ENCODE measurements at regions of chr2 and their contacts with region 1.

Region 1: DNA sequence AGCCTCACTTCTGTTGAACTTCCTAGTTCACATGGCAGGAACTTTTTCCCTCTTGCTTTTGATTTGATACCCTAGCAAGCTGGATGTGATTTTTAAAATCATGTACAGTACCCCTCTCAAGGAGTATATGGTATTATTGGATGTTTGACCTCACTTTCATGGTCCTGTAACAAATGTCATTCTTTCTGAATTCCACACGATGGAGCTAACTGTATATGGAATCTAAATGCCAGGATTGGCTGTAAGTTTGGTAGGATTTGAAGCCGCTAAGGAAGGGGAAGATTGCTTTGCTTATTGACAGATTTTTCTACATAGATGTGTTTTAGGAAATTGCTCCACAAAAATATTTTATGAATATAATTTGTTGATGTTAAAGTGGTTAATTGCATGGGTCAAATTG is 18.3 kb downstream of the MAIP1 start:
- DNase-seq: peak; percentile 14
- H3K4me3 ChIP-seq: no peak overlapping the region
- CTCF ChIP-seq: peak; percentile 41

Region 2: DNA sequence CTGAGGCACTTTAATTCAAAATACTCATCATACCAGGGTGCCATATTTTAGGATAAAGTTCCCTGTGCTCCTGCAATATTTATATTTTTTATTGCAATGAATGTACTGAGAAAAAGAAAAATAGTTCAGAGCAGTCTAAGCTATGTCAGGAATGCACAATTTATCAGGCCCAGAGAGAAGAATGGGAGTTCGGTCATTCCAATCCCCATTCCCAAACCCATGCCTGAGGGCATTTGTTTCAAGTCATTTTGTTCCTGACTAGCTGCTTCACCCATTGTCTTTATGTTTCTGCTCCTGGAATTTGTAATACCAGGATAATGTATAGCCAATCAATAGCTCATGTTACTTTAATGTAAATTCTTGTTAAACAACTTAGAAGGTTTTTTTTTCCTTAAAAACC is 98.3 kb before region 1 on chr2:
- CTCF ChIA-PET with region 1: no interaction called
- POLR2A ChIA-PET with region 1: no interaction called
- DNase-seq: no peak
- H3K4me3 ChIP-seq: no peak overlapping the region
- CTCF ChIP-seq: no peak

Region 3: DNA sequence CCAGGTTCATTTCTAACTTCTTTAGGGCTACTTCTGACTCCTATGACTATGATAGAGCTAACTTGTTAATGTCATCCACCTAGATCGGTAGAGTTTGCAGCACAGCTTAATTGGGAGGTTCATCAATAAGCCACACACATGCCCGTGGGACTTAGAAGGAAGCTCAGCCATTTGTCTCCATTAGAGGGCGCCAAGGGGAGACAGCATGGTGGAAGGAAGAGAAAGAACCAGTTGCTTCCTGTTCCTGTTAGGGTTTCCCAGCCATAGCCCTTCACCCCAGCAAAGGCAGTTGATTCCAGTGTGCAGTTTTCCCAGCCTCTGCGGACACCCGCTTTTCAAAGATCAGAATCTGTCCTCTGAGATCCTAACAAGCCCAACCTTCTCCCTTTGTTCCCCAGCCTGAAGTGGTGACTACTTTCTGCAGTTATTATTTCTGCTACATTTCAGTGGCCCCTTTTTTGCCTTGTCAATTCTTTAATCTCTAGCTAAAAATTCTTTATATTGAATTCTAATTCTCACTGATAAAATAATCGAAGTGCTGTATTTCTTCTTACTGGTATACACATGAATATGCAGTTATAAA is 12.0 kb after region 1 on chr2:
- CTCF ChIA-PET with region 1: interaction called, 33 read pairs
- POLR2A ChIA-PET with region 1: no interaction called
- DNase-seq: no peak
- H3K4me3 ChIP-seq: no peak overlapping the region
- CTCF ChIP-seq: peak; percentile 70

Region 4: GRCh38 chr2:200077210-200077650 is 103.5 kb after region 1 on chr2:
- CTCF ChIA-PET with region 1: no interaction called
- POLR2A ChIA-PET with region 1: no interaction called
- DNase-seq: peak; percentile 85
- H3K4me3 ChIP-seq: no peak overlapping the region
- CTCF ChIP-seq: no peak

Region 5: DNA sequence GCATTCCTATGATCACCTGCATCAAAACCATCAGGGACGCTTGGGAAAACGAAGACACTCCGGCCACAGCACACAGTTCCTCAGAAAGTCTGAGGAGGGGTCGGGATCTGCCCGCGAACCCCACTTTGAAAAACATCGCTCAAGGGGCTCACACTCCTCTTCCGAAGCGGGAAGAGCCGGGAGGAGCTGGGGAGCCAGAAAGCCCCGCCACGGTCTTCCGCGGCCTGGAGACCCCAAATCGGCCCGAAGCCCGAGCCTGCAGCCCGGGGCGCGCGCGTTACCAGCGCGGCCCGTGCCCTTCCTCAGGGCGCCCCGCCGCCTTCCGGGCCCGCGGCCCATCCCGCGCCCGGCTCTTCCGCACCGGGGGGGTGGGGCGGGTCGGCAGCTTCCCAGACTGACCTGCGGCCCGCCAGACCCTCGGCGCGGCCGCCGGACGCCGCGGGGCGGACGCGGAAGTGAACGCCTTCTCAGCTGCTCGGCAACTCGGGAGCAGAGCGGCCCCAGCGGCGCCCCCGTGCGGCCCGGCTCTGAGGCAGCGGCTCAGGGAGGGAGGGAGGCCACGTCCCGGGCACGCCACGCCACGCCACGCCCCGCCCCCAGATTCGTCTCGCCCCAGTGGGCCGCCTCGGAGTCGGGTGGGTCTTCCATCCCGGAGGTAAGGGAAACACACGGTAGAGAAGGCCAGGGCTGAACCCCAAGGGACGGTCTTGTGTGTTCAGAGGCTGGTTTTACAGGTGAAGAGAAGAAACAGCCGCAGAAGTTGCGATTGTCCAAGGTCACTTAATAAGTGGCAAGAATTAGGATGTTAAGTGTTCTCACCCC is 536.1 kb after region 1 on chr2 and contains the start of gene KCTD18:
- CTCF ChIA-PET with region 1: interaction called, 16 read pairs
- POLR2A ChIA-PET with region 1: interaction called, 3 read pairs
- DNase-seq: no peak
- H3K4me3 ChIP-seq: peak within 1 kb of the TSS; percentile 77
- CTCF ChIP-seq: peak; percentile 97

Region 6: DNA sequence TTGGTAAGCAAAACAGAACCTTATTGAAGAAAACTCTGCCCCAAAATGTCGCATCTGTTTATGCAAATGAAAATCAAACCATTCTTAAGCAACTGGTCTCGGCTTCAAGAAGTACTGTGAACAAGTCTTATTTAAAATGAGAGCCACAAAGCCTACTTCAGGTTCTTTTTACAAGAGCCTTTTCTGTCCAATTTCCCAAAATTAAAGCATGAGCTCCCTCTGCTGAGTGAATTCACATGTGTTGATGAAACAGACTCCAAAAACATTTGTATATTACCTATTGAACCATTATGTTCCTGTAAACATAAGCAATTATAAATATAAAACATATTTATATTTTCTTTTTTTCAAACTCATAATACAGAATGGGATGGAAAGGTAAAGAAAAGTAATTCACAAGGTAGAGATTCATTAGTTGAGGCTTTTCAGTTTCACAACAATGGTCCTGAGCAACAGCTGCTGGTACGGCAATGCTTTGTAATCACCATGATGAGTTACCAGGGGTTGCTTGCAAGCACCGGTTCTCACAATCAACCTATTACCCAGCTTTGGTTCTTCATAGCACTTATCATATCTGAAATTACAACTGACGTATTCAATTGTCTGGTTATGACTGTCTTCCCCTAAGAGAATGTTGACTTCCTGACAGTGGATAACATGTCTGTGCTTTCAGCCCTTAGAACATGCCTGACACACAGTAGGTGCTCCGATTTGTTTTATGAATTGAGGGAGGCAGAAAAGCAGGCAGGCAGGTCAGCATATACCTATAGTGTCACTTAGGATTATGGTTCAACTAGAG is 729.6 kb after region 1 on chr2:
- CTCF ChIA-PET with region 1: interaction called, 99 read pairs
- POLR2A ChIA-PET with region 1: no interaction called
- DNase-seq: peak; percentile 26
- H3K4me3 ChIP-seq: no peak overlapping the region
- CTCF ChIP-seq: peak; percentile 41

Region 7: DNA sequence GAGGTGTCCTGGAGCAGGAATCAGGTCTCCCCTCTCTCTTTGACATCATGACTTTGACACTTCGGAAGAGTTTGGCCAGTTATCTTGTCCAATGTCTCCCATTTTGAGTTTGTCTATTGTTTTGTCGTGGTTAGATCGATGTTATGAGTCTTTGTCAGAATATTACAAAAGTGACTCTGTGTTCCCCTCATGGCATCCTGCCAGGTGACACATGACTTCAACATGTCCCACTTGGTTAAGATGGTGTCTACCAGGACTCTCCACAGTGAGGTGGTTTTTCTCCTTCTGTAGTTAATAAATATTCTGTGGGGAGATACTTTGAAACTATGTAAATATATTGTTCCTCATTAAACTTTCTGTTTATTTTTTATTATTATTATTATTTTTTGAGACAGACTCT is 761.4 kb after region 1 on chr2:
- CTCF ChIA-PET with region 1: interaction called, 13 read pairs
- POLR2A ChIA-PET with region 1: no interaction called
- DNase-seq: no peak
- H3K4me3 ChIP-seq: no peak overlapping the region
- CTCF ChIP-seq: no peak